Dorsolateral prefrontal cortex (tissue), 120 donors: ENCODE measurements at regions of chr4 and their contacts with region 1.

Region 1: DNA sequence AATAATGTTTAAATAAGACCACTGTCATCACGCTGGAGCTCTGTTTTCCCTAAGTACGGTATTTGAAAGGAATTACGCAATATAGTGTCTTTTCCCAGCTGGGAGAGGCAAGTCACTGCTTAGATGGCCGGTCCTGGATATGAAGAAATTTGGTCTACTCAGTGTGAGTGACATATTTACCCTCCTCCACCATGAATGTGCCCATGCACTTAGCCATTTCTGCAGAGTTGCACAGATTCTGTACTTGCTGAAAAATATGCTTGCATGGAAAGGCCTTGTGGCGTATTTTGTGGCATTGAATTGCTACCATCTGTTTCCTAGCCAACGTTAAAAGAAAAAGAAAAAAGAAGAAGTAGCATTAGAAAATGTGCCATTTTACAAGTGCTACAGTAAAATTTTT is 73.1 kb downstream of the ADGRL3 start:
- DNase-seq: no peak
- H3K4me3 ChIP-seq: peak overlapping the region in 42 of 59 donors; percentile 1 to 49 (median 20)
- H3K27ac ChIP-seq: peak overlapping the region in 51 of 59 donors; percentile 10 to 83 (median 58)
- H3K27me3 ChIP-seq: no peaks in the 10 kb centered on the region
- CTCF ChIP-seq: peak in 1 of 56 donors; percentile 4

Region 2: GRCh38 chr4:61200187-61200915 is 72.9 kb before region 1 on chr4 and contains the start of gene ADGRL3:
- intact Hi-C with region 1: loop called (anchors 10 kb)
- DNase-seq: peak; percentile 36 to 83 (median 66)
- H3K4me3 ChIP-seq: peak within 1 kb of the TSS; percentile 51 to 91 (median 80)
- H3K27ac ChIP-seq: peak within 1 kb of the TSS; percentile 55 to 96 (median 91)
- H3K27me3 ChIP-seq: peaks cover 0 to 7% (median 0%) of the 10 kb centered on the region in 45 donors
- CTCF ChIP-seq: peak in 19 of 56 donors; percentile 9 to 38 (median 19)
- total RNA-seq, gene ADGRL3: 52.6 to 148 (median 110) TPM